ENCODE measurements at regions of chr5 and their contacts with region 1.

Region 1: GRCh38 chr5:54959673-54960418 is 25.5 kb downstream of the ESM1 start:
- DNase-seq: no peak
- H3K4me3 ChIP-seq: no peak overlapping the region
- CTCF ChIP-seq: no peak

Region 2: GRCh38 chr5:54844905-54845566 is 114.8 kb before region 1 on chr5:
- CTCF ChIA-PET with region 1: no interaction called
- POLR2A ChIA-PET with region 1: no interaction called
- DNase-seq: no peak
- H3K4me3 ChIP-seq: no peak overlapping the region
- CTCF ChIP-seq: no peak

Region 3: GRCh38 chr5:54969856-54970828 is 10.3 kb after region 1 on chr5:
- CTCF ChIA-PET with region 1: interaction called, 13 read pairs
- POLR2A ChIA-PET with region 1: interaction called, 3 read pairs
- DNase-seq: no peak
- H3K4me3 ChIP-seq: no peak overlapping the region
- CTCF ChIP-seq: no peak

Region 4: GRCh38 chr5:55004729-55005128 is 44.9 kb after region 1 on chr5:
- CTCF ChIA-PET with region 1: no interaction called
- POLR2A ChIA-PET with region 1: no interaction called
- DNase-seq: no peak
- H3K4me3 ChIP-seq: no peak overlapping the region
- CTCF ChIP-seq: no peak

Region 5: GRCh38 chr5:55146543-55147151 is 186.8 kb after region 1 on chr5:
- CTCF ChIA-PET with region 1: interaction called, 13 read pairs
- POLR2A ChIA-PET with region 1: no interaction called
- DNase-seq: peak; percentile 17
- H3K4me3 ChIP-seq: no peak overlapping the region
- CTCF ChIP-seq: peak; percentile 95

Measured in AG04449 (cell line).